ENCODE measurements at regions of chr5 and their contacts with region 1.

Region 1: GRCh38 chr5:103829585-103829984 is 267.0 kb upstream of the NUDT12 start:
- DNase-seq: peak in 1 of 2 experiments; percentile 66
- H3K4me3 ChIP-seq: no peak overlapping the region
- H3K27ac ChIP-seq: no peak overlapping the region
- H3K4me1 ChIP-seq: no peaks in the 10 kb centered on the region
- H3K27me3 ChIP-seq: no peaks in the 10 kb centered on the region
- CTCF ChIP-seq: peak in 2 of 3 experiments; percentile 45 to 58; a peak in 3 of 4 replicates
- EP300 ChIP-seq: no peak
- POLR2A ChIP-seq: no peak
- RAD21 ChIP-seq: peak; percentile 35 to 50; a peak in 3 of 4 replicates

Region 2: DNA sequence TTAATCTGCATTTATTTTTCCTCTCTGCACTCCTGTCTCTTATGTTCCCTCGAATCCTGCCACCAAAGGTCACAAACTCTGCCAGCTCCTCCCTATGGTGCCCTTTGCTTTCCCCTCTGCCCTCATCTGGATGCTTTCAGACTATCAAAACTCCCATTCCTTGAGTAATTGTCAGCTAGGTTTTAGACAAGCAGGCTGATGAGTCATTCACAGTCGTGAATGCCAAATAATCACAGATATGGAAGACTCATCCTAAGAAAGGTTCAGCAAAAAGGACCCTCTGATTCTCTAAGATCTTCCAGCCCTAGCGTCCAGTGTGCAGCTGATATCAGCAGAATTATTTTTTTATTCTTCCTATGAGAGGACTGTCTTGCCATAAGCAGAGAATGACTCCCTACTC is 162.5 kb before region 1 on chr5:
- CTCF ChIA-PET with region 1: no interaction called
- POLR2A ChIA-PET with region 1: no interaction called
- DNase-seq: no peak
- H3K4me3 ChIP-seq: no peak overlapping the region
- H3K27ac ChIP-seq: no peak overlapping the region
- H3K4me1 ChIP-seq: no peaks in the 10 kb centered on the region
- H3K27me3 ChIP-seq: no peaks in the 10 kb centered on the region
- CTCF ChIP-seq: no peak
- EP300 ChIP-seq: no peak
- POLR2A ChIP-seq: no peak
- RAD21 ChIP-seq: no peak

Region 3: GRCh38 chr5:103840600-103840999 is 11.0 kb after region 1 on chr5:
- CTCF ChIA-PET with region 1: interaction called, 17 read pairs
- POLR2A ChIA-PET with region 1: no interaction called
- DNase-seq: no peak
- H3K4me3 ChIP-seq: no peak overlapping the region
- H3K27ac ChIP-seq: no peak overlapping the region
- H3K4me1 ChIP-seq: no peaks in the 10 kb centered on the region
- H3K27me3 ChIP-seq: no peaks in the 10 kb centered on the region
- CTCF ChIP-seq: no peak
- EP300 ChIP-seq: no peak
- POLR2A ChIP-seq: no peak
- RAD21 ChIP-seq: no peak

Region 4: DNA sequence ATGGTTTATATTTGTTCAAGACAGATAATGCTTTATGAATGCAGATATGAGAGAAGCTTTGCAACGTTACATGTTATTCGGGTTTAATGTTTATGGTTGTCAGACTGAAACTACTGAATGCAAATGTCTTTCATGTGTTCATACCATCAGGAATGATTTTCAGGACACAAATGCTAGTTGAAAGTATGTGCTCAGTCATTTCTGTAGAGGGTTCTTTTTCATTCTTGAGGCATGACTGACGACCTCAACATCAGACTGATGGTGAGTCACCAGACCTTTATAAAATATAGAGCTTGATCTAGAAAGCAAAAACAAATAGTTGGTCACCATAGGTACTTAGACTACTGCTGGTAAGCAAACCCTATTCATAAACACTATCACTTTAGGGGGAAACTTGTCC is 20.3 kb after region 1 on chr5:
- CTCF ChIA-PET with region 1: interaction called, 15 read pairs
- POLR2A ChIA-PET with region 1: no interaction called
- DNase-seq: no peak
- H3K4me3 ChIP-seq: no peak overlapping the region
- H3K27ac ChIP-seq: no peak overlapping the region
- H3K4me1 ChIP-seq: no peaks in the 10 kb centered on the region
- H3K27me3 ChIP-seq: no peaks in the 10 kb centered on the region
- CTCF ChIP-seq: no peak
- EP300 ChIP-seq: no peak
- POLR2A ChIP-seq: no peak
- RAD21 ChIP-seq: no peak